Activated CD4-positive, alpha-beta memory T cell treated with anti-CD3 and anti-CD28 coated beads, Interleukin-2, amount 10 ng/mL, durations not matched to agents 7 days and 5 days (primary cell): ENCODE measurements at regions of chr21 and their contacts with region 1.

Region 1: GRCh38 chr21:41419911-41420862 is 5.9 kb upstream of the MX1 start:
- DNase-seq: peak; percentile 70
- H3K4me3 Mint-ChIP-seq: peak overlapping the region; percentile 82
- H3K27ac Mint-ChIP-seq: peak overlapping the region; percentile 82
- H3K4me1 Mint-ChIP-seq: peaks cover 60% of the 10 kb centered on the region
- H3K27me3 Mint-ChIP-seq: peaks cover 10% of the 10 kb centered on the region

Region 2: DNA sequence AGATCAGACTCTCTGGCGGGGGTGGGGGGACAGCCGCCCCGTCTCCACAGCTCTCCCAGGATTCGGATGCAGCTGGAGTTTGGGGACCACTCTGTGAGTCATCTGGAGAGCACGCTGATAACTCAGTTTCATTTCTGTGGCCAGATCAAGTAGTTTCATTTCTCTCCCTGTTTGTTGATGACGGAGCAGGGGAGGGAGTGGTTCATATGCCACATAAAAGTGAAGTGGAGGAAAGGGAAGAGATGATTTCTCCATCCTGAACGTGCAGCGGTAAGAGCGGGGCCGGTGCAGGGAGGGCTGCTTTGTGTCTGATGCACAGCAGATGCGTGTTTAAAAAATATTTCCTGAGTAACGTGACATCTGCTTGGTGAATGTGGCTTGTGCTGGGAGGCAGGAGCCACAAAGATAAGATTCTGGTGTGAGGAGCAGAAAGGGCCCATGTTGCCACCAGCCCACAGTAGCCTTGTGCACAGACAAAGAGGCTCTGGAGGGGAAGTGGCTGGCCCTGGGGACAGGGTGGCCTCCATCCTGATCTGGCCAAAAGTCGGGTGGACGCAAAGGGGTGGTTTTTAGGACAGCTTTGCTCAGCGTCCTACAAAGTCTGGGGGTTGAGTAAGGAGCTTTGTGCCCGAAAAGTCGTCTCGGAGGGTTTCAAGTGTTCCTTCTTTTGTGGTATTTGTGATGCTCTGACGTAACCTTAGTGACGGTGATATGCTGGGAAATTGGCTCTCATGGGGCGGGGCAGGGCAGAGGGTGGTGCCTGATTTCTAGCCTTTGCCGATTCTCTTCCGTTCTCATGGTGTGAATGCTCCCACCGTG is 58.2 kb before region 1 on chr21 and contains the start of gene MX2:
- CTCF ChIA-PET with region 1: interaction called, 10 read pairs
- POLR2A ChIA-PET with region 1: interaction called, 116 read pairs
- DNase-seq: peak; percentile 88
- H3K4me3 Mint-ChIP-seq: peak within 1 kb of the TSS; percentile 94
- H3K27ac Mint-ChIP-seq: peak within 1 kb of the TSS; percentile 97
- H3K4me1 Mint-ChIP-seq: peaks cover 56% of the 10 kb centered on the region
- H3K27me3 Mint-ChIP-seq: peaks cover 5% of the 10 kb centered on the region
- total RNA-seq, gene MX2: 167 to 171 TPM

Region 3: GRCh38 chr21:41369105-41369919 is 50.9 kb before region 1 on chr21:
- CTCF ChIA-PET with region 1: interaction called, 5 read pairs
- POLR2A ChIA-PET with region 1: interaction called, 42 read pairs
- DNase-seq: peak; percentile 29
- H3K4me3 Mint-ChIP-seq: peak overlapping the region; percentile 70
- H3K27ac Mint-ChIP-seq: peak overlapping the region; percentile 77
- H3K4me1 Mint-ChIP-seq: peaks cover 72% of the 10 kb centered on the region
- H3K27me3 Mint-ChIP-seq: no peaks in the 10 kb centered on the region